Heart right ventricle (tissue), 16 donors: ENCODE measurements at regions of chr4 and their contacts with region 1.

Region 1: DNA sequence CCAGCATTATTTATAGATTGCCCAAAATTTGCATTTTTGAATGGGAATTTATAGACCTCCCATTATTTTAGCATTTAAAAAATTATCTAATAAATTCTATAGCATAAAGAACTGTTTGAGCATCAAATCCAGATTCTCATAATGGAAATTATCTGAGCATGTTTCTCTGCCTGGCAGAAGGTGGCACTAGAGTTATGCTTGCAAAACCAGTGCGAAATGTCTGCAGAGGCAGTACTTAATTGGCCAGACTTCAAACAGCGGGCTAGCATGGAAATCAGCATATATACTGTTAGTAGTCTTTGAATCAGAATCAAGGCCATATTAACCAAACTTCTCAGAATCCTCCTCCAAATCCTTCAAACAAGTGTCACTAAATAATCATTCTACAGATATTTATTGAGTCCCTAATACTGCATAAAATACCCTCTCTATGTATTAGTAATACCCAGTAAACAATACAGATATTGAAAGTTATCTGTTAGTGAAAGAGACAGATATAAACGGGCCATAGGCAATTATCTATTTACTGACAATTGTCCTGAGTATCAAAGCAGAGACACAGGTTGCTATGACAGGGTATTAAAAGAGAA is 78.7 kb upstream of the DCLK2 start:
- DNase-seq: peak in 1 of 2 donors; percentile 26
- ATAC-seq: peak in 5 of 8 donors; percentile 63 to 73 (median 69)
- H3K4me3 ChIP-seq: no peak overlapping the region
- H3K27ac ChIP-seq: no peak overlapping the region
- H3K4me1 ChIP-seq: peaks cover 0 to 15% (median 9%) of the 10 kb centered on the region in 9 donors
- H3K27me3 ChIP-seq: no peaks in the 10 kb centered on the region
- CTCF ChIP-seq: peak; percentile 57 to 81 (median 74)

Region 2: GRCh38 chr4:150224896-150225591 is 225.5 kb after region 1 on chr4:
- intact Hi-C with region 1: loop called in 1 of 10 experiments (anchors 5 kb)
- DNase-seq: no peak
- ATAC-seq: peak in 3 of 8 donors; percentile 50 to 69 (median 53)
- H3K4me3 ChIP-seq: no peak overlapping the region
- H3K27ac ChIP-seq: no peak overlapping the region
- H3K4me1 ChIP-seq: peaks cover 0 to 32% (median 10%) of the 10 kb centered on the region in 9 donors
- H3K27me3 ChIP-seq: no peaks in the 10 kb centered on the region
- CTCF ChIP-seq: no peak

Region 3: GRCh38 chr4:150237110-150237857 is 237.7 kb after region 1 on chr4:
- intact Hi-C with region 1: loop called in 6 of 10 experiments (anchors 2 to 10 kb)
- DNase-seq: no peak
- ATAC-seq: peak in 2 of 8 donors; percentile 30 to 37
- H3K4me3 ChIP-seq: no peak overlapping the region
- H3K27ac ChIP-seq: no peak overlapping the region
- H3K4me1 ChIP-seq: peaks cover 0 to 23% (median 5%) of the 10 kb centered on the region in 9 donors
- H3K27me3 ChIP-seq: no peaks in the 10 kb centered on the region
- CTCF ChIP-seq: no peak

Region 4: GRCh38 chr4:150242820-150243458 is 243.4 kb after region 1 on chr4:
- intact Hi-C with region 1: loop called in 6 of 10 experiments (anchors 2 to 10 kb)
- DNase-seq: peak in 1 of 2 donors; percentile 25
- ATAC-seq: peak in 6 of 8 donors; percentile 11 to 63 (median 50)
- H3K4me3 ChIP-seq: no peak overlapping the region
- H3K27ac ChIP-seq: no peak overlapping the region
- H3K4me1 ChIP-seq: no peaks in the 10 kb centered on the region
- H3K27me3 ChIP-seq: no peaks in the 10 kb centered on the region
- CTCF ChIP-seq: peak; percentile 82 to 94 (median 90)

Region 5: DNA sequence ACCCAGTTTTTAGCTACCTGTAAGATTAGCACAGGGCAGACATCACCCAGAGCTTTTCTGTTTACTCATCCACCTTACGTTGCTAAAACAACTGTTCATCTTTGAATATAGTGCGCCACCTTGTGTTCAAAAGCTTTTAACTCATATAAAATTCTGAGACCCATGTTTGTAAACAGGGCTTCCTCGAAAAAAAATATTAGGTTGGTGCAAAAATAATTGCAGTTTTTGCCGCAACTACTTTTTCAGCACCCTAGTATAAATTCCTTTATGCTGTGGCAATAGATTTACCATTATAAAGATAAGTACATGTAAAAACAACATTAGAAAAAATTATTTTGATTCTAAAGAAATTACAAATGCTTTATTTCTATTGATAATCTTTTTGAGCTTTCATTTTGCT is 867.6 kb after region 1 on chr4:
- intact Hi-C with region 1: loop called in 5 of 10 experiments (anchors 5 to 10 kb)
- DNase-seq: peak in 1 of 2 donors; percentile 59
- ATAC-seq: peak in 7 of 8 donors; percentile 55 to 82 (median 72)
- H3K4me3 ChIP-seq: no peak overlapping the region
- H3K27ac ChIP-seq: no peak overlapping the region
- H3K4me1 ChIP-seq: peaks cover 0 to 4% (median 0%) of the 10 kb centered on the region in 9 donors
- H3K27me3 ChIP-seq: no peaks in the 10 kb centered on the region
- CTCF ChIP-seq: peak; percentile 55 to 78 (median 69)

Region 6: DNA sequence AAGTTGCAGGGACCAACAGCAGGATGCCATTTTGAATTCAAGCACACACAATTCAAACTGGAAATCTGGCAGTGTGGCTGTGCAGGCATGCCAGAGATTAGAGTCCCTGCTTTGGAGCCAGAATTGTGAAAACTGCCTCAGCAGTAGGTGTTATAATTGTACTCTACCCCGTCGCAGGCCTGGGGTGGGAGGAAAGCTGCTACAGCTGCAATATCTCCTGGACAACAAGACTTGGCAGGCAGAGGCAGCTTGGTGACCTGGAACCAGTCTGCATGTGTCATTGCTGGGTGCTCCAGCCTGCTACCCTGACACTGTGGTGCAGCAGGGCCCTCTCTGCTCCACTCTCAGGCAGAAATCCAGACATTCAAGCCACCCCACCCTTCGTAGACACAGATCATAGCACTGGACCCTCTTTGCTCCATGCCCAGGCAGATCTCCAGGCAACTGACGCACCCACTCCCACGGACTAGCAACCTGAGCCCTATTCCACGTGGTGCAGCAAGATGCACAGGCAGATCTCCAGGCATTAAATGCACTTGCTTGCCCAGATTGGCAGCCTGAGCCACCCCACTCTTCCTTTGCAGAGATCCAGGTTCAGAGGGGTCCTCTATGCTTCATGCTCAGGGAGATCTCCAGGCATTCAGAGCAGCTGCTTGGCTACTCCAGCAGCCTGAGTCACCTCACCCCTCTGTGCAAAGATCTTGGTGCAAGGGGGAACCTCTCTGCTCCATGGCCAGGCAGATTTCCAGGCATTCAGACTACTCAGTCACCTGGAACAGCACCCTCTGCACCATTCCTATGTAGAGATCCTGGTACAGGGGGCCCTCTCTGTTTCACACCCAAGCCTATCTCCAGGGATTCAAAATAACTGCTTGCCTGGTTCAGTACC is 875.0 kb after region 1 on chr4:
- intact Hi-C with region 1: loop called in 5 of 10 experiments (anchors 5 to 10 kb)
- DNase-seq: peak; percentile 55 to 70
- ATAC-seq: peak; percentile 93 to 99 (median 98)
- H3K4me3 ChIP-seq: peak overlapping the region in 3 of 10 donors; percentile 8 to 15 (median 9)
- H3K27ac ChIP-seq: peak overlapping the region in 9 of 10 donors; percentile 10 to 80 (median 56)
- H3K4me1 ChIP-seq: peaks cover 0 to 13% (median 5%) of the 10 kb centered on the region in 9 donors
- H3K27me3 ChIP-seq: no peaks in the 10 kb centered on the region
- CTCF ChIP-seq: no peak